Activated naive CD4-positive, alpha-beta T cell treated with anti-CD3 and anti-CD28 coated beads, Interleukin-2, amount 10 ng/mL, durations not matched to agents 7 days and 5 days (primary cell): ENCODE measurements at regions of chr10 and their contacts with region 1.

Region 1: GRCh38 chr10:69515699-69516259 is 57.4 kb downstream of the NEUROG3 start:
- DNase-seq: peak; percentile 87
- H3K4me3 Mint-ChIP-seq: no peak overlapping the region
- H3K27ac Mint-ChIP-seq: peak overlapping the region; percentile 50
- H3K4me1 Mint-ChIP-seq: no peaks in the 10 kb centered on the region
- H3K27me3 Mint-ChIP-seq: peaks cover 44% of the 10 kb centered on the region

Region 2: GRCh38 chr10:69374242-69374641 is 141.5 kb before region 1 on chr10:
- CTCF ChIA-PET with region 1: no interaction called
- DNase-seq: no peak
- H3K4me3 Mint-ChIP-seq: no peak overlapping the region
- H3K27ac Mint-ChIP-seq: no peak overlapping the region
- H3K4me1 Mint-ChIP-seq: peaks cover 4% of the 10 kb centered on the region
- H3K27me3 Mint-ChIP-seq: no peaks in the 10 kb centered on the region

Region 3: GRCh38 chr10:69527961-69528360 is 12.2 kb after region 1 on chr10:
- CTCF ChIA-PET with region 1: interaction called, 13 read pairs
- DNase-seq: no peak
- H3K4me3 Mint-ChIP-seq: no peak overlapping the region
- H3K27ac Mint-ChIP-seq: no peak overlapping the region
- H3K4me1 Mint-ChIP-seq: no peaks in the 10 kb centered on the region
- H3K27me3 Mint-ChIP-seq: peaks cover 30% of the 10 kb centered on the region

Region 4: GRCh38 chr10:69629897-69630650 is 114.3 kb after region 1 on chr10 and contains the start of gene FAM241B:
- CTCF ChIA-PET with region 1: interaction called, 302 read pairs
- DNase-seq: peak; percentile 88
- H3K4me3 Mint-ChIP-seq: peak within 1 kb of the TSS; percentile 65
- H3K27ac Mint-ChIP-seq: no peak within 1 kb of the TSS
- H3K4me1 Mint-ChIP-seq: peaks cover 17% of the 10 kb centered on the region
- H3K27me3 Mint-ChIP-seq: peaks cover 9% of the 10 kb centered on the region

Region 5: GRCh38 chr10:69716711-69717560 is 201.2 kb after region 1 on chr10:
- CTCF ChIA-PET with region 1: interaction called, 16 read pairs
- DNase-seq: peak; percentile 79
- H3K4me3 Mint-ChIP-seq: no peak overlapping the region
- H3K27ac Mint-ChIP-seq: no peak overlapping the region
- H3K4me1 Mint-ChIP-seq: no peaks in the 10 kb centered on the region
- H3K27me3 Mint-ChIP-seq: peaks cover 21% of the 10 kb centered on the region

Region 6: DNA sequence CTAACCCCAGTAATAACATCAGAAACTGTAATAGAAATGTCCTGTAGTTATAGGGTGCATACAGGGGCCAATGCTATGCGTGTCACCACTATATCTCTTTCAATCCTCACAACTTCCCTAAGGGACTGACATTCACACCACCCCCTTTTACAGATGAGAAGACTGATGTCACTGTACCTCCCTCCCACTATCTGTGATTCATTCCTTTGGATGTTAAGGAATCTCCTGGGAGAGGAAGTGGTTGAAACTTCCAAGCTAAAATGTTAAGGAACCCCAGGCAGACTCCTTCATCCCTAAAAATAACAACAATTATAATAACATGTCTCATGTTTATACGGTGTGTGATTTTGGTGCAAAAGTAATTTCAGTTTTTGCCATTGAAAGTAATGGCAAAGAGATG is 291.3 kb after region 1 on chr10:
- CTCF ChIA-PET with region 1: no interaction called
- DNase-seq: no peak
- H3K4me3 Mint-ChIP-seq: no peak overlapping the region
- H3K27ac Mint-ChIP-seq: no peak overlapping the region
- H3K4me1 Mint-ChIP-seq: peaks cover under 1% of the 10 kb centered on the region
- H3K27me3 Mint-ChIP-seq: peaks cover 45% of the 10 kb centered on the region